AG04449 (cell line): ENCODE measurements at regions of chr2 and their contacts with region 1.

Region 1: DNA sequence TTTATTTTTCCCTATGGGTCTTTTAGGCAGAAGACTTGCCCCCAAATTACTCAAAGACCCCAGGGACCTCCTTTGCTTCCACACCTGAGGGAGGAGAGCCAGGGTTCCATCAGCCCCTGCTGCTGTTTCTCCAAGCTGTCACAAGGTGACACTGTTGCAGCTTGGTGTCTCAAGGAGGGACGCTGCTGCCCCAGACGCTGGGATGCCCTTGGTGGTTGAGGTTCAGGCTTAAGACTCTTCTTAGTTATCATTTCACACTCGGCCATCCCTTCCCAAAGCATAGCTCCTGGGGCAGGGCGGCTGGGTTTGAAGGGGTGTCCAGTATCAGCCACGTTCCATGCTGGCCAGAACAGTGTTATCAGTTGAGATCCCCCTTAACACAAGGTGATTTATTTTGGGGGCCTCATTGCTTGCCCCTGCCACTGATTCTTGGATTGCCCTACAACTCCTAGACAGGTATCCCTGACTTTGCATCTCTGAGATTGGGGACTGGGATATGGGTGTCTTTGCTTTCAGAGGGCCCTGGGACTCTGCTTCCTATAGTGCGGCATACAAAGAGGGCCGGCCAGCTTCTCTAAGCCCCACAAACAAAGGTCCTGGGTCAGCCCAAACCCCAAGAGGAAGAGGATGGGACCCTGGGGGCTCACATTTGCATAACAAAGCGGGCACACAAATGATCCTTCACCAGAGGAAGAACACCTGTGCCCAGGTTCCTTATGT is 22.7 kb downstream of the GPR55 start:
- DNase-seq: peak; percentile 10
- H3K4me3 ChIP-seq: no peak overlapping the region
- CTCF ChIP-seq: peak; percentile 96

Region 2: DNA sequence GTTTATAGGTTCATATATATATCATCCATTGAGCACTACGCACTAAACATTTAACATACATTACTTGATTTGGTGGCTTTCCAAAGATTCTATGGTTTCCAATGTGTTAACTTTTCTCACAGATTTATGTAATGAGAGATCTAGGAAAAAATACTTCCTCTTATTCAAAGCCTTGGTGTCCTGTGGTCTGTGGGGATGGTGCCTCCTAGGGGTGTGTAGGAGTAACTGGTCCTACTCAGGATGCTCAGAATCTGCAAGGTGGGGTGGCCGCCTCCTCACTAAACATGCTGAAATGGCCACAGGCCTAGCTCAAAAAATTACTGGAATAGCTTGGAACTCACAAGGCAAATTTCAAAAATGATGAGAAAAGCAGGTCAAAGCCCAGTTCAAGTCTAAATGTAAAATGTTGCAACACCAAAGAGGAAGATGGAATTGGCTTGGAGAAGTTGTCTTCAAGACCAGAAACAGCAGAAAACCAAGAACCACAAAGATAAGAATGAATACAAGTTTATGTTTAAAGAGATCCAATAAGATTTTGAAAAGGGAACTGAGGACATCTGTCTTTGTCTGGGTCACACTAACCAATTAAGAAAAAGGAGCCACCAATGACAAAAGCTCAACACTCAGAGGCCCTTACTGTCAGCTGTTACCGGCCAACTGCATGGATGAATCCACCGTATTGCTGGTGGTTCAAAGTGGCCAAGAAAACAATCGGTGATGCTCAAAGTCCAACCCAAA is 11.2 kb after region 1 on chr2:
- CTCF ChIA-PET with region 1: interaction called, 17 read pairs
- POLR2A ChIA-PET with region 1: no interaction called
- DNase-seq: no peak
- H3K4me3 ChIP-seq: no peak overlapping the region
- CTCF ChIP-seq: peak; percentile 0